B cell (primary cell): ENCODE measurements at regions of chr1 and their contacts with region 1.

Region 1: GRCh38 chr1:27772933-27773825 is at the start of gene STX12:
- DNase-seq: peak; percentile 99
- ATAC-seq: peak; percentile 92
- H3K4me3 ChIP-seq: peak within 1 kb of the TSS; percentile 91 to 98 (median 97)
- H3K4me3 Mint-ChIP-seq: peak within 1 kb of the TSS; percentile 93
- H3K27ac ChIP-seq: peak within 1 kb of the TSS; percentile 94 to 98
- H3K27ac Mint-ChIP-seq: peak within 1 kb of the TSS; percentile 95
- H3K4me1 ChIP-seq: peaks cover 16 to 29% of the 10 kb centered on the region in 2 donors
- H3K4me1 Mint-ChIP-seq: peaks cover 35% of the 10 kb centered on the region
- H3K27me3 ChIP-seq: no peaks in the 10 kb centered on the region
- H3K27me3 Mint-ChIP-seq: no peaks in the 10 kb centered on the region
- CTCF ChIP-seq: no peak
- total RNA-seq, gene STX12: 29.4 and 36.4 TPM in 2 replicates

Region 2: GRCh38 chr1:27097484-27097917 is 675.7 kb before region 1 on chr1:
- CTCF ChIA-PET with region 1: no interaction called
- POLR2A ChIA-PET with region 1: no interaction called
- intact Hi-C with region 1: loop called (anchors 5 kb)
- DNase-seq: peak; percentile 81
- ATAC-seq: peak; percentile 48
- H3K4me3 ChIP-seq: no peak overlapping the region
- H3K4me3 Mint-ChIP-seq: no peak overlapping the region
- H3K27ac ChIP-seq: no peak overlapping the region
- H3K27ac Mint-ChIP-seq: peak overlapping the region; percentile 53
- H3K4me1 ChIP-seq: peaks cover 12 to 23% of the 10 kb centered on the region in 2 donors
- H3K4me1 Mint-ChIP-seq: peaks cover 20% of the 10 kb centered on the region
- H3K27me3 ChIP-seq: no peaks in the 10 kb centered on the region
- H3K27me3 Mint-ChIP-seq: no peaks in the 10 kb centered on the region
- CTCF ChIP-seq: peak; percentile 95

Region 3: DNA sequence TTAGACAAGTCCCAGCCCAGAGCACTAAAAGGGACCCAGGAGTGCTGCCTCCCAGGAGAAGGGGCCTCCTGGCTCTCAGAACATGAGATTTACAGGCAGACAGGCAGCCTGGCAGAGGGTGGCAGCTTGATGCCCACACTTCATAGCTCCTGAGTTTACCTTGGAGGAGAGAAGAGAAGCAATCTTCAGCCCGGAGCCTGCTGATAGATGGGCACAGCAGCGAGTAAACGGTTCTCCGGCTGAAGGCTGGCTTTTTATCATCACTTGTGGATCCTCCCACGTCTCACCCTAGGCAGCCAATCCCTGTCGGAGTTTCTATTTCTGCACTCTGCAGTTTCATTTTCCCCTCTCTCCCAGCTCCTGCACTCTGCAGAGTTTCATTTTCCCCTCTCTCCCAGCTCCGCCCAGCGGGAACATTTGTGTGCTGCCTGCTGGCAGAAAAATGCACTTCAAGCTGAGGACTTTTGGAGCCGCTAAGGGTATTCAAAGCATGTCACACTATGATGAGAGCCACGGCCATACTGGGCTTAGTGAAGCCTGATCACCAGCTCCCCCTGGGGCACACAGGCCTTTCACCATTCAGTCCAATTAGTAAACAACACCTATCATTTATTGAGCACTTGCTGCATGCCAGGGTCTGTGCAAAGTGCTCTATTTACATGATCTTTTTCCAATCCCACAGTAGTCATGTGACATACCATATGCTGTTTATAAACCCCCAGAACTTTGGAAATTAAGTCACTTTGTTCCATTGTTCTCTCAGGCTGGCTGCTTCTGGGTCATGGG is 101.0 kb before region 1 on chr1 and contains the start of gene IFI6:
- CTCF ChIA-PET with region 1: interaction called, 14 read pairs
- POLR2A ChIA-PET with region 1: no interaction called
- intact Hi-C with region 1: loop called (anchors 1 kb)
- DNase-seq: peak; percentile 83
- ATAC-seq: peak; percentile 90
- H3K4me3 ChIP-seq: peak within 1 kb of the TSS; percentile 59 to 85 (median 75)
- H3K4me3 Mint-ChIP-seq: peak within 1 kb of the TSS; percentile 93
- H3K27ac ChIP-seq: peak within 1 kb of the TSS; percentile 84 to 89
- H3K27ac Mint-ChIP-seq: peak within 1 kb of the TSS; percentile 97
- H3K4me1 ChIP-seq: peaks cover 14 to 24% of the 10 kb centered on the region in 2 donors
- H3K4me1 Mint-ChIP-seq: peaks cover 26% of the 10 kb centered on the region
- H3K27me3 ChIP-seq: no peaks in the 10 kb centered on the region
- H3K27me3 Mint-ChIP-seq: no peaks in the 10 kb centered on the region
- CTCF ChIP-seq: peak; percentile 45
- total RNA-seq, gene IFI6: 12.0 and 12.7 TPM in 2 replicates

Region 4: GRCh38 chr1:27725374-27726173 is 47.6 kb before region 1 on chr1 and contains the start of gene FAM76A:
- CTCF ChIA-PET with region 1: interaction called, 13 read pairs
- POLR2A ChIA-PET with region 1: interaction called, 12 read pairs
- intact Hi-C with region 1: loop called (anchors 1 kb)
- DNase-seq: peak; percentile 100
- ATAC-seq: peak; percentile 91
- H3K4me3 ChIP-seq: peak within 1 kb of the TSS; percentile 68 to 94 (median 74)
- H3K4me3 Mint-ChIP-seq: peak within 1 kb of the TSS; percentile 94
- H3K27ac ChIP-seq: peak within 1 kb of the TSS; percentile 96 to 98
- H3K27ac Mint-ChIP-seq: peak within 1 kb of the TSS; percentile 98
- H3K4me1 ChIP-seq: peaks cover 17% of the 10 kb centered on the region in 2 donors
- H3K4me1 Mint-ChIP-seq: peaks cover 25% of the 10 kb centered on the region
- H3K27me3 ChIP-seq: no peaks in the 10 kb centered on the region
- H3K27me3 Mint-ChIP-seq: no peaks in the 10 kb centered on the region
- CTCF ChIP-seq: peak; percentile 27
- total RNA-seq, gene FAM76A: 25.0 and 28.5 TPM in 2 replicates

Region 5: DNA sequence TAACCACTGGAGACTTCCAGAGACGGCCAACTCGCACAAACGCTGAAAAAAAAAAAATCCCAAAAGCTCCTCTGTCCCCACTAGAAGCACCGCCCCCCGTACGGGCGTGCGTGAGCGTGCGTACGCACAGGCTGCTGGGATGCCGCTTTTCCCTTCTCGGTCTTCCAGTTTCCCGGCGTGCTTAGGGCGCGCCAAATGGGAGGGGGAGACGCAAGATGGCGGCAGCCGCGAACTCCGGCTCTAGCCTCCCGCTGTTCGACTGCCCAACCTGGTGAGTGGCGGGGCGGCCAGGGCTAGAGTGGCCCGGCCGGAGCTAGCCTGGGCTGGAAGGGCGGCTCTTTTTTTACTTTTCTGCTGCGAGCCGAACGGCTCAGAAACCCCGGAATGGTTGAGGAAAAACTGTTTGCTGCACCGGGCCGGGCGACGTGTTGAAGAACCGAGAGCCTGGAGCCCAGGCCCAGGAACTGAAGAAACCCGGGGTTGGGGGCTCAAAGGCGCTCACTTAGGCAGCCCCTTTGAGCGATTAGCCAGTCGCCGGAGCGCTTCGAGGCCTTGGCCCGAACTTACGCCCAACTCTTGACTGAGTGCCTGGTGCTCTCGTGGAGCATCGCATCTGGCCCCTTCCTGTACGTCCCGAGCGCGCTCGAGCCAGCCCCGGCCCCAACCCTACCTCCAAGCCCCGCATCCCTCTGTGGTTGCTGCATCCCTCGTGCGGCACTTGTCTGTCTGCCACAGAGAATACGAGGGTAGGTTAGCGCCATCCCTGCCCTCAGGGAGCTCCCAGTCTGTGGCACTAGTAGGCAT is 57.6 kb after region 1 on chr1 and contains the start of gene PPP1R8:
- CTCF ChIA-PET with region 1: no interaction called
- POLR2A ChIA-PET with region 1: interaction called, 4 read pairs
- intact Hi-C with region 1: loop called (anchors 1 kb)
- DNase-seq: peak; percentile 92
- ATAC-seq: peak; percentile 99
- H3K4me3 ChIP-seq: peak within 1 kb of the TSS; percentile 74 to 98 (median 90)
- H3K4me3 Mint-ChIP-seq: peak within 1 kb of the TSS; percentile 94
- H3K27ac ChIP-seq: peak within 1 kb of the TSS; percentile 55 to 88
- H3K27ac Mint-ChIP-seq: peak within 1 kb of the TSS; percentile 93
- H3K4me1 ChIP-seq: peaks cover 12 to 17% of the 10 kb centered on the region in 2 donors
- H3K4me1 Mint-ChIP-seq: peaks cover 23% of the 10 kb centered on the region
- H3K27me3 ChIP-seq: no peaks in the 10 kb centered on the region
- H3K27me3 Mint-ChIP-seq: no peaks in the 10 kb centered on the region
- CTCF ChIP-seq: no peak
- total RNA-seq, gene PPP1R8: 45.1 and 45.4 TPM in 2 replicates

Region 6: GRCh38 chr1:27959400-27960217 is 186.4 kb after region 1 on chr1 and contains the start of gene XKR8:
- CTCF ChIA-PET with region 1: no interaction called
- POLR2A ChIA-PET with region 1: no interaction called
- intact Hi-C with region 1: loop called (anchors 1 kb)
- DNase-seq: peak; percentile 88
- ATAC-seq: peak; percentile 98
- H3K4me3 ChIP-seq: peak within 1 kb of the TSS; percentile 63 to 92 (median 85)
- H3K4me3 Mint-ChIP-seq: peak within 1 kb of the TSS; percentile 93
- H3K27ac ChIP-seq: peak within 1 kb of the TSS; percentile 51 to 82
- H3K27ac Mint-ChIP-seq: peak within 1 kb of the TSS; percentile 89
- H3K4me1 ChIP-seq: peaks cover 14 to 17% of the 10 kb centered on the region in 2 donors
- H3K4me1 Mint-ChIP-seq: peaks cover 16% of the 10 kb centered on the region
- H3K27me3 ChIP-seq: peaks cover 0 to 3% (median 0%) of the 10 kb centered on the region in 4 experiments
- H3K27me3 Mint-ChIP-seq: no peaks in the 10 kb centered on the region
- CTCF ChIP-seq: peak; percentile 48
- total RNA-seq, gene XKR8: 8.7 and 10.1 TPM in 2 replicates